ENCODE measurements at regions of chr3 and their contacts with region 1.

Region 1: GRCh38 chr3:64248247-64248646 is 23.0 kb upstream of the PRICKLE2 start:
- DNase-seq: peak; percentile 63
- H3K4me3 ChIP-seq: no peak overlapping the region
- H3K4me3 Mint-ChIP-seq: peak overlapping the region; percentile 3
- H3K27ac Mint-ChIP-seq: peak overlapping the region; percentile 81
- H3K4me1 ChIP-seq: peaks cover 90% of the 10 kb centered on the region
- H3K4me1 Mint-ChIP-seq: peaks cover 55% of the 10 kb centered on the region
- H3K27me3 ChIP-seq: no peaks in the 10 kb centered on the region
- H3K27me3 Mint-ChIP-seq: no peaks in the 10 kb centered on the region
- CTCF ChIP-seq: no peak

Region 2: GRCh38 chr3:64163755-64164148 is 84.5 kb before region 1 on chr3:
- CTCF ChIA-PET with region 1: no interaction called
- POLR2A ChIA-PET with region 1: no interaction called
- intact Hi-C with region 1: loop called (anchors 5 kb)
- DNase-seq: peak in 1 of 2 experiments; percentile 22
- H3K4me3 ChIP-seq: no peak overlapping the region
- H3K4me3 Mint-ChIP-seq: peak overlapping the region; percentile 16
- H3K27ac Mint-ChIP-seq: peak overlapping the region; percentile 69
- H3K4me1 ChIP-seq: peaks cover 59% of the 10 kb centered on the region
- H3K4me1 Mint-ChIP-seq: peaks cover 21% of the 10 kb centered on the region
- H3K27me3 ChIP-seq: no peaks in the 10 kb centered on the region
- H3K27me3 Mint-ChIP-seq: no peaks in the 10 kb centered on the region
- CTCF ChIP-seq: no peak

Region 3: GRCh38 chr3:64319391-64319790 is 71.1 kb after region 1 on chr3:
- CTCF ChIA-PET with region 1: no interaction called
- POLR2A ChIA-PET with region 1: no interaction called
- intact Hi-C with region 1: loop called (anchors 5 kb)
- DNase-seq: peak; percentile 37 to 63
- H3K4me3 ChIP-seq: no peak overlapping the region
- H3K4me3 Mint-ChIP-seq: no peak overlapping the region
- H3K27ac Mint-ChIP-seq: peak overlapping the region; percentile 66
- H3K4me1 ChIP-seq: peaks cover 54% of the 10 kb centered on the region
- H3K4me1 Mint-ChIP-seq: peaks cover 38% of the 10 kb centered on the region
- H3K27me3 ChIP-seq: no peaks in the 10 kb centered on the region
- H3K27me3 Mint-ChIP-seq: no peaks in the 10 kb centered on the region
- CTCF ChIP-seq: peak; percentile 29 to 33

Region 4: DNA sequence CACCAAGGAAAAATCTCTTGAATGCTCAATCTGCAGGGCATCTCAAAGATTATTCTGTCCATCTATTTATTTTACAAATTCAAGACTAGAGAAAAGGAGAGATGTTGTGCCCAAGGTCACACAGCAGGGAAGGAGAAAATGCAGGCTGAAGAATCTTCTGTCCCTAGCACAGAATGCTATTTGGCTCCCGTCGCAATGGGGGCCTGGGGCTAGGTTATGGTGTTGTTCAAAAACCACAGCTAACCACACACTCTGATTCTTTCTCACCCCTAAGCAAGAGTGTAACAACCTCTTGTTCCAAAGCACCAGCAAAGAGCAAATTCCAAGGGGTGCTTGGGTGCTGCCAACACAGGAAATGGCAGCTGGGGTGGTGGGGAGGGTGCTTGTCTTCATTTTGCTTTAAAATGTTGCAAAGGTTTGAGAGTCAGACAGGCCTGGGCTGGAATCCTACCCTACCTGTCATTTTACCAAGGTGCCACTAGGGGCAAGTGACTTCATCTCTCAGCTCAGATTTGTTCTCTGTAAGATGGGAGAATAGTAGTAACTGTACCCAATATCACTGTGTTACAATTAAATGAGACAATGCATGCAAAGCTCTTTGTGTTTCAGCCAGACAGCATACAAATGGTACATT is 327.1 kb after region 1 on chr3:
- CTCF ChIA-PET with region 1: no interaction called
- POLR2A ChIA-PET with region 1: no interaction called
- intact Hi-C with region 1: no loop called
- DNase-seq: peak in 1 of 2 experiments; percentile 22
- H3K4me3 ChIP-seq: no peak overlapping the region
- H3K4me3 Mint-ChIP-seq: no peak overlapping the region
- H3K27ac Mint-ChIP-seq: no peak overlapping the region
- H3K4me1 ChIP-seq: peaks cover 19% of the 10 kb centered on the region
- H3K4me1 Mint-ChIP-seq: peaks cover 14% of the 10 kb centered on the region
- H3K27me3 ChIP-seq: no peaks in the 10 kb centered on the region
- H3K27me3 Mint-ChIP-seq: no peaks in the 10 kb centered on the region
- CTCF ChIP-seq: peak; percentile 52 to 63

Measured in Caco-2 (cell line).